ENCODE measurements at regions of chr6 and their contacts with region 1.

Region 1: DNA sequence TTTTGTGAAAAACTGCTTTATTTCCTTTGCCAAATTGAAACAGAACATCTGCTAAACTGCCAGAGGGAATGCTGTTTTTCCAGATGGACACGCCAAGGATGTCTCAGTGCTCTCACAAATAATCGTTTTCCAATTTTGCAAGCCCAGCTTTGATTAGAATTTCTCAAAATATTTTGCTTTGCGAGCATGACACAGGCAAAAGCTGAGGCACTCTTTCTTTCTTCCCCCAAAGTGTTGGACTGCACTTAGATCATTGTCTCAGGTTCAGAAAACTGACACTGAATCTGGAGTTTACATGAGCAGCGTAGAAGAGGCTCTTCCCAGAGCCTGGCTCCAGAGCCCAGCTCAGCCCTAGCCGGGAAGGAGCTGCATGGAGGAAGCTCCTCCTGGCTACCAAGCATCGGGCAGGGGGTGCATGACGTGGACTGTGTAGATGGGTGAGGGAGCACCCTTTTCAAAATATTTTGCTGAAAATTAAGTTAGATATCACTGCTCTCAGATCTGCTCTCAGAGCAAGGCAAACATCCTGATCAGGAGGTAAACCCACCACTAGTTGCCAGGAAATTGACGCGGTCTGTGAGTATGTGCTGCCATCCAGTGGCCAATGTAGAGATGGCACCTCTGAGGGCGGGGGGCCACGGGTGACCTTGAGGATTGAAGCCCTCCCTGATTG is 107.5 kb downstream of the SLC22A3 start:
- DNase-seq: peak; percentile 62
- ATAC-seq: peak; percentile 86
- H3K4me3 ChIP-seq: no peak overlapping the region
- H3K27ac ChIP-seq: no peak overlapping the region
- H3K4me1 ChIP-seq: peaks cover 8% of the 10 kb centered on the region
- H3K27me3 ChIP-seq: no peaks in the 10 kb centered on the region
- CTCF ChIP-seq: peak; percentile 100
- EP300 ChIP-seq: no peak
- POLR2A ChIP-seq: no peak
- RAD21 ChIP-seq: peak; percentile 97

Region 2: DNA sequence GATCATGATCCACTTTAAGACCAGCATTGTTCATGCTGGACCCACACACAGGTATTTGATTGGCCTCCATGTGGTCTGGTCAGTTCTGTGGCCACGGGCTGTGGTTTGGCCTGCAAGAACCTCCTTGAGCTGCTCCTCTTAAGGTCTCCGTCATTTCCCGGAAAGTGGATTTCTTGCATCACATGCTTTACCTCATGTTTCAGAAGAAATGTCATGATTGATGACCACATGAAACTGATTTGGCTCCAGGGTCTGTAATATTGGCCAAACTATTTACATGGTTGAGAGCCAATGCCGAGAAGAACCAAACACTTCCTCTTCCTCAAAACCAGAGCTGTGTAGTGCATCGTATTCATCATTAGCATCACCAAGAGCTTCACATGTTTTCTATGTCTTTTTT is 1442.4 kb before region 1 on chr6:
- CTCF ChIA-PET with region 1: no interaction called
- POLR2A ChIA-PET with region 1: no interaction called
- in situ Hi-C with region 1: no loop called
- intact Hi-C with region 1: no loop called
- DNase-seq: no peak
- ATAC-seq: no peak
- H3K4me3 ChIP-seq: no peak overlapping the region
- H3K27ac ChIP-seq: no peak overlapping the region
- H3K4me1 ChIP-seq: no peaks in the 10 kb centered on the region
- H3K27me3 ChIP-seq: no peaks in the 10 kb centered on the region
- CTCF ChIP-seq: no peak
- EP300 ChIP-seq: no peak
- POLR2A ChIP-seq: no peak
- RAD21 ChIP-seq: no peak

Region 3: GRCh38 chr6:160348142-160349019 is 107.3 kb before region 1 on chr6 and contains the start of gene SLC22A3:
- CTCF ChIA-PET with region 1: no interaction called
- POLR2A ChIA-PET with region 1: no interaction called
- in situ Hi-C with region 1: no loop called
- intact Hi-C with region 1: loop called (anchors 5 kb)
- DNase-seq: no peak
- ATAC-seq: peak; percentile 73
- H3K4me3 ChIP-seq: peak within 1 kb of the TSS; percentile 74 to 86 (median 86)
- H3K27ac ChIP-seq: peak within 1 kb of the TSS; percentile 95
- H3K4me1 ChIP-seq: peaks cover 41% of the 10 kb centered on the region
- H3K27me3 ChIP-seq: peaks cover 0 to 6% of the 10 kb centered on the region in 2 experiments; a peak in 1 of 5 replicates
- CTCF ChIP-seq: peak; percentile 31
- EP300 ChIP-seq: no peak
- POLR2A ChIP-seq: peak in 1 of 2 experiments; percentile 49; a peak in 2 of 4 replicates
- RAD21 ChIP-seq: peak; percentile 4
- total RNA-seq, gene SLC22A3: 20.1 and 31.5 TPM in 2 replicates

Region 4: DNA sequence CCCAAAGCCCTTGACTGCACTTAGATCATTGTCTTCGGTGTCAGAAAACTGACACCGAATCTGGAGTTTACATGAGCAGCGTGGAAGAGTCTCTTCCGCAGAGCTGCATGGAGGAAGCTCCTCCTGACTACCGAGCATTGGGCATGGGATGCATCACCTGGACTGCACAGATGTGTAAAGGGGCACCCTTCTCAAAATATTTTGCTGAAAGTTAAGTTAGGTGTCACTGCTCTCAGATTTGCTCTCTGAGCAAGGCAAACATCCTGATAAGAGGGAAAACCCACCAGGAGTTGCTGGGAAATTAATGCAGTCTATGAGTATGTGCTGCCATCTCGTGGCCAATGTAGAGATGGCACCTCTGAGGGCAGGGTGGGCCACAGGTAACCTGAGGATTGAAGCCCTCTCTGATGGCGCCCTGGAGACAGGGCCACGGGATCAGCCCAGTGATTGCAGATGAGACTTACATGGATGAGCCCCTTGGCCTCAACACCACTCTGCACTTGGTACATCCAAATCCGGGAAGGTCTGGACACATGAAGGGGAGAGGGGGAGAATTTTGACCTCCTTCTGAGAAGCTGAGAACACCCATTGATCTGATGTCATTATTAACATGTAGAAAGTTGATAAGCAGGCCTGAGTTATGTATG is 78.5 kb after region 1 on chr6:
- CTCF ChIA-PET with region 1: no interaction called
- POLR2A ChIA-PET with region 1: no interaction called
- in situ Hi-C with region 1: no loop called
- intact Hi-C with region 1: loop called (anchors 1 kb)
- DNase-seq: peak; percentile 52
- ATAC-seq: peak; percentile 96
- H3K4me3 ChIP-seq: no peak overlapping the region
- H3K27ac ChIP-seq: no peak overlapping the region
- H3K4me1 ChIP-seq: peaks cover 4% of the 10 kb centered on the region; the same call in 1 of the 2 replicates
- H3K27me3 ChIP-seq: no peaks in the 10 kb centered on the region
- CTCF ChIP-seq: peak; percentile 97
- EP300 ChIP-seq: no peak
- POLR2A ChIP-seq: no peak
- RAD21 ChIP-seq: peak; percentile 89

Measured in HepG2 (cell line).